ENCODE measurements at regions of chr12 and their contacts with region 1.

Region 1: GRCh38 chr12:106136263-106136662 is 2.5 kb downstream of the NUAK1 start:
- DNase-seq: peak; percentile 7 to 77 (median 61)
- ATAC-seq: peak in 2 of 4 experiments; percentile 25 to 43
- H3K4me3 ChIP-seq: no peak overlapping the region
- H3K4me3 Mint-ChIP-seq: no peak overlapping the region
- H3K27ac ChIP-seq: no peak overlapping the region
- H3K27ac Mint-ChIP-seq: no peak overlapping the region
- H3K4me1 ChIP-seq: peaks cover 0 to 23% of the 10 kb centered on the region in 2 experiments
- H3K4me1 Mint-ChIP-seq: peaks cover 18 to 27% (median 19%) of the 10 kb centered on the region in 3 donors
- H3K27me3 ChIP-seq: peaks cover 22 to 45% of the 10 kb centered on the region in 2 experiments
- H3K27me3 Mint-ChIP-seq: peaks cover 63 to 69% of the 10 kb centered on the region in 2 donors

Region 2: GRCh38 chr12:105420659-105421240 is 715.5 kb before region 1 on chr12:
- CTCF ChIA-PET with region 1: interaction called, 17 to 33 read pairs
- POLR2A ChIA-PET with region 1: no interaction called
- DNase-seq: peak in 34 of 35 experiments; percentile 1 to 75 (median 47)
- ATAC-seq: peak; percentile 54 to 63 (median 57)
- H3K4me3 ChIP-seq: no peak overlapping the region
- H3K4me3 Mint-ChIP-seq: no peak overlapping the region
- H3K27ac ChIP-seq: no peak overlapping the region
- H3K27ac Mint-ChIP-seq: no peak overlapping the region
- H3K4me1 ChIP-seq: no peaks in the 10 kb centered on the region
- H3K4me1 Mint-ChIP-seq: no peaks in the 10 kb centered on the region
- H3K27me3 ChIP-seq: no peaks in the 10 kb centered on the region
- H3K27me3 Mint-ChIP-seq: peaks cover 0 to 4% of the 10 kb centered on the region in 2 donors

Region 3: GRCh38 chr12:106163712-106164111 is 27.4 kb after region 1 on chr12:
- CTCF ChIA-PET with region 1: no interaction called
- POLR2A ChIA-PET with region 1: no interaction called
- DNase-seq: no peak
- ATAC-seq: no peak
- H3K4me3 ChIP-seq: no peak overlapping the region
- H3K4me3 Mint-ChIP-seq: no peak overlapping the region
- H3K27ac ChIP-seq: no peak overlapping the region
- H3K27ac Mint-ChIP-seq: no peak overlapping the region
- H3K4me1 ChIP-seq: no peaks in the 10 kb centered on the region
- H3K4me1 Mint-ChIP-seq: no peaks in the 10 kb centered on the region
- H3K27me3 ChIP-seq: peaks cover 0 to 18% of the 10 kb centered on the region in 2 experiments
- H3K27me3 Mint-ChIP-seq: peaks cover 52 to 63% of the 10 kb centered on the region in 2 donors

Region 4: DNA sequence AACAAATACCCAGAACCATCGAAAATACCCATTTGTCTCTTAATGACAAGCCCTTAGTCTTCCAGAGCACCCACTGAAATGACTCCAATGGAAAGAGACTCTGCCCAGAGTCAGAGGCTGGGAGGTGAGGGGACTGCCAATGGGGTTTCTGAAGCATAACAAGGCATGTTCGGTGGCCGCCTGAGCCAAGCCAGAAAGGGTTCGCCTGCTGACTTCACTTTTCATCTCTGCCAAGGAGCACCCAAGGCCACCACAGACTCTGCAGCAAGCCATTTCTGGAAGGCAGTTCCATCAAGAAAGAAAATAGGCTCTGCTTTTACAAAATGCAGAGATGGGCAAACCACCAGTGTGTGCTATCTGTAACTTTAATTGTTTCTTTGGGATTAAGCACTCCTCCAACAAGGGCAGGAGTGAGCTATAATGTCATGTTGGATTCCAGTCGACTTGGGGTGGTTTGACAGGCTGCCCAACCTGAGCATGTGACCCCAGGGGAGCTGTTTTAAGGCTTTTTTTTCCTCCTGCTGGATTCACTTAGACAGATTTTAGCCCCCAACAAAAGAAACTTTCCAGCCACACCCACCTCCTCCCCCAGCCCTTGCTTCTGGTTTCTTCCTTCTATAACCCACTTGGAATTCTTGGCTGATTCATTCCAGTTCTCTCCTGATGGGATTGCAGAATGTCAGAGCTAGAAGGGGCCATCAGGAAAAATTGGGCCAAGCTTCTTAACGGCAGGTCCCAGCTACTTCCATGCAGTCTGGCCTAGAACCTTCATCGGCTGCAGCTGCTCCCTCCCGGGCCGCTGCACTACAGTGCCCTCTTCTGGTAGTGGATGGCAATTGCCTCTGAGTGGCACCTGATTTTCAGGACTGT is 87.5 kb after region 1 on chr12:
- CTCF ChIA-PET with region 1: no interaction called
- POLR2A ChIA-PET with region 1: no interaction called
- DNase-seq: peak; percentile 38 to 82 (median 62)
- ATAC-seq: peak; percentile 47 to 81 (median 57)
- H3K4me3 ChIP-seq: no peak overlapping the region
- H3K4me3 Mint-ChIP-seq: no peak overlapping the region
- H3K27ac ChIP-seq: no peak overlapping the region
- H3K27ac Mint-ChIP-seq: peak overlapping the region in 1 of 2 donors; percentile 22
- H3K4me1 ChIP-seq: peaks cover 4 to 16% of the 10 kb centered on the region in 2 experiments
- H3K4me1 Mint-ChIP-seq: peaks cover 16 to 25% (median 19%) of the 10 kb centered on the region in 3 donors
- H3K27me3 ChIP-seq: peaks cover 0 to 4% of the 10 kb centered on the region in 2 experiments
- H3K27me3 Mint-ChIP-seq: peaks cover 16 to 19% of the 10 kb centered on the region in 2 donors